ENCODE measurements at regions of chr12 and their contacts with region 1.

Region 1: GRCh38 chr12:22459838-22460490 is 84.4 kb downstream of the C2CD5 start:
- DNase-seq: peak in 6 of 9 donors; percentile 22 to 43 (median 34)
- ATAC-seq: peak; percentile 81
- H3K4me3 ChIP-seq: no peak overlapping the region
- H3K4me3 Mint-ChIP-seq: no peak overlapping the region
- H3K27ac ChIP-seq: no peak overlapping the region
- H3K27ac Mint-ChIP-seq: peak overlapping the region in 2 of 9 donors; percentile 4 to 30
- H3K4me1 ChIP-seq: no peaks in the 10 kb centered on the region
- H3K4me1 Mint-ChIP-seq: peaks cover 0 to 3% (median 0%) of the 10 kb centered on the region in 7 donors
- H3K27me3 ChIP-seq: no peaks in the 10 kb centered on the region
- H3K27me3 Mint-ChIP-seq: no peaks in the 10 kb centered on the region

Region 2: GRCh38 chr12:21607701-21608100 is 852.3 kb before region 1 on chr12:
- CTCF ChIA-PET with region 1: no interaction called
- POLR2A ChIA-PET with region 1: no interaction called
- intact Hi-C with region 1: loop called in 1 of 2 experiments (anchors 5 kb)
- DNase-seq: peak in 6 of 9 donors; percentile 14 to 57 (median 43)
- ATAC-seq: no peak
- H3K4me3 ChIP-seq: no peak overlapping the region
- H3K4me3 Mint-ChIP-seq: no peak overlapping the region
- H3K27ac ChIP-seq: no peak overlapping the region
- H3K27ac Mint-ChIP-seq: no peak overlapping the region
- H3K4me1 ChIP-seq: peaks cover 0 to 10% of the 10 kb centered on the region in 2 donors
- H3K4me1 Mint-ChIP-seq: peaks cover 2 to 8% (median 7%) of the 10 kb centered on the region in 7 donors
- H3K27me3 ChIP-seq: no peaks in the 10 kb centered on the region
- H3K27me3 Mint-ChIP-seq: peaks cover 0 to 7% (median 0%) of the 10 kb centered on the region in 5 donors

Region 3: GRCh38 chr12:21697904-21698630 is 761.9 kb before region 1 on chr12:
- CTCF ChIA-PET with region 1: interaction called, 11 read pairs
- POLR2A ChIA-PET with region 1: no interaction called
- intact Hi-C with region 1: loop called in 1 of 2 experiments (anchors 1 kb)
- DNase-seq: peak in 5 of 9 donors; percentile 23 to 48 (median 45)
- ATAC-seq: peak; percentile 54
- H3K4me3 ChIP-seq: no peak overlapping the region
- H3K4me3 Mint-ChIP-seq: peak overlapping the region in 6 of 10 donors; percentile 21 to 83 (median 52)
- H3K27ac ChIP-seq: no peak overlapping the region
- H3K27ac Mint-ChIP-seq: no peak overlapping the region
- H3K4me1 ChIP-seq: peaks cover 0 to 5% of the 10 kb centered on the region in 2 donors
- H3K4me1 Mint-ChIP-seq: peaks cover 0 to 22% (median 11%) of the 10 kb centered on the region in 7 donors
- H3K27me3 ChIP-seq: no peaks in the 10 kb centered on the region
- H3K27me3 Mint-ChIP-seq: peaks cover 0 to 15% (median 0%) of the 10 kb centered on the region in 5 donors

Region 4: DNA sequence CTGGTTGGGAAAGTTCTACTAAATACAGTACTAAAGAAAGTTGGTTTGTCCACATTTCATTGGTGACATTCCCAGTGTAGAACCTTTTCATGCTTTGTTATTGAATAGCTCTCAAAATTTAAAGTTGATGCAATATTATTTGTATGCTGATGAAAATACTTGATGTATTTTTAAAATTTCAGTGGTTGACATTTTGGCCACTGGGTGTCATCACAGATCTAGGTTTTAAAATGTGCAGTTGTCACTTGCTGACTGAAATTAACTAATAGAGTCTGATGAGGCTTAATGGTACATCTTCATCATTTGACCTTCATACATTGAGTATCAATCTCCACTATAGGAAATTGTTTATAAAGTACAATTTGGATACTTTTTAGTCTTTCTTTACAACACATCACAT is 376.8 kb before region 1 on chr12:
- CTCF ChIA-PET with region 1: interaction called, 9 read pairs
- POLR2A ChIA-PET with region 1: interaction called, 7 read pairs
- intact Hi-C with region 1: loop called (anchors 1 kb)
- DNase-seq: peak in 7 of 9 donors; percentile 18 to 57 (median 47)
- ATAC-seq: peak; percentile 56
- H3K4me3 ChIP-seq: no peak overlapping the region
- H3K4me3 Mint-ChIP-seq: no peak overlapping the region
- H3K27ac ChIP-seq: no peak overlapping the region
- H3K27ac Mint-ChIP-seq: no peak overlapping the region
- H3K4me1 ChIP-seq: no peaks in the 10 kb centered on the region
- H3K4me1 Mint-ChIP-seq: no peaks in the 10 kb centered on the region
- H3K27me3 ChIP-seq: no peaks in the 10 kb centered on the region
- H3K27me3 Mint-ChIP-seq: peaks cover 0 to 9% (median 0%) of the 10 kb centered on the region in 5 donors

Region 5: GRCh38 chr12:22100958-22101748 is 358.8 kb before region 1 on chr12:
- CTCF ChIA-PET with region 1: interaction called, 5 read pairs
- POLR2A ChIA-PET with region 1: no interaction called
- intact Hi-C with region 1: loop called in 1 of 2 experiments (anchors 5 kb)
- DNase-seq: peak in 6 of 9 donors; percentile 12 to 47 (median 40)
- ATAC-seq: peak; percentile 78
- H3K4me3 ChIP-seq: no peak overlapping the region
- H3K4me3 Mint-ChIP-seq: no peak overlapping the region
- H3K27ac ChIP-seq: no peak overlapping the region
- H3K27ac Mint-ChIP-seq: no peak overlapping the region
- H3K4me1 ChIP-seq: peaks cover 0 to 4% of the 10 kb centered on the region in 2 donors
- H3K4me1 Mint-ChIP-seq: peaks cover 0 to 15% (median 6%) of the 10 kb centered on the region in 7 donors
- H3K27me3 ChIP-seq: no peaks in the 10 kb centered on the region
- H3K27me3 Mint-ChIP-seq: peaks cover 0 to 25% (median 0%) of the 10 kb centered on the region in 5 donors

Region 6: DNA sequence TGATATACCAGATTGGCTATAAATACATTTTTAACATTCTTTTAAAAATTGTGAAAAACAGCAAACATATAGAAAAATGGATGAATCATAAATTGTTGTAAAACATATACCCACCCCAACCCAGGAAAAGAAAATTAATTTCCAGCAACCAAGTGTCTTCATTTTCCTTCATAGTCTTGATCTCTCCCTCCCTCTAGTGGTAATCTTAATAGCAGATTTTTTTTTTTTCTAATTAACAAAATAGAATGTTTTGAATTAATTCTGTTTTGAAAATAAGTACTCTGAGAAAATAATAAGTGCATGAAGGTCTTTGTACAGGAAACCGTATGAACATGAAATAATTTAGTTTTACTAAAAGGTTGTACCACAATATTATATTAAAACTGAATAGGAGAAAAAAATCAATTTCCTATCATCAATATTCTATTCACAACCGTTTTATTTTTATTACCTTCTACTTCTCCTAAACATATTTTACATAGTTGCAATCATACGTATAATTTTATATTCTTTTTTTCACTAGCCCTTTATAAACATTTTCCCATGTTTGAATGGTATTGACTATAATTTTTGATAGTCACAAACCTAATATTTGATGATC is 172.0 kb after region 1 on chr12:
- CTCF ChIA-PET with region 1: interaction called, 4 read pairs
- POLR2A ChIA-PET with region 1: no interaction called
- intact Hi-C with region 1: loop called (anchors 2 to 5 kb)
- DNase-seq: peak in 5 of 9 donors; percentile 25 to 41 (median 30)
- ATAC-seq: peak; percentile 63
- H3K4me3 ChIP-seq: no peak overlapping the region
- H3K4me3 Mint-ChIP-seq: peak overlapping the region in 1 of 10 donors; percentile 10
- H3K27ac ChIP-seq: no peak overlapping the region
- H3K27ac Mint-ChIP-seq: peak overlapping the region in 3 of 9 donors; percentile 4 to 26 (median 22)
- H3K4me1 ChIP-seq: peaks cover 25 to 27% of the 10 kb centered on the region in 2 donors
- H3K4me1 Mint-ChIP-seq: peaks cover 51 to 93% (median 86%) of the 10 kb centered on the region in 7 donors
- H3K27me3 ChIP-seq: no peaks in the 10 kb centered on the region
- H3K27me3 Mint-ChIP-seq: no peaks in the 10 kb centered on the region

Measured in naive thymus-derived CD4-positive, alpha-beta T cell (primary cell).